ENCODE measurements at regions of chr17 and their contacts with region 1.

Region 1: GRCh38 chr17:35747540-35748017 is 5.5 kb downstream of the GAS2L2 start:
- DNase-seq: peak; percentile 85
- ATAC-seq: peak; percentile 90
- H3K4me3 Mint-ChIP-seq: no peak overlapping the region
- H3K27ac Mint-ChIP-seq: no peak overlapping the region
- H3K4me1 Mint-ChIP-seq: peaks cover 8% of the 10 kb centered on the region
- H3K27me3 Mint-ChIP-seq: peaks cover 46% of the 10 kb centered on the region

Region 2: DNA sequence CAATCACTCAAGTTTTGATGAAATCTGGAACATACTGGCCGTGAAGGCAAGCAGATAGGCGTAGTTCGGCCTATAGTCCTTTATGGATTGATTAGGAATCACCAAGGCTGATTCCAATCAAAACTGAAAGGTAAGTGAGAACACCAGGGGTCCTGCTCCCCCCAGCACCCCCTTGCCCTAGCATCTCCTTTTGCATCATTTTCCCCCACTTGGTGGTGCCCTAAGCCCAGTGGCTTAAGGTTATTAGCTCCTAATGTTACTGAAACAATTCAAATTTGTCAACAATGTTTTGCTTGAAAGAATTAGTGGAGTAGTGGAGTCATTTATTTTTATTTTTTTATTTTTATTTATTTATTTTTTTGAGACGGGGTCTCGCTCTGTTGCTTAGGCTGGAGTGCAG is 191.9 kb before region 1 on chr17:
- CTCF ChIA-PET with region 1: interaction called, 10 read pairs
- DNase-seq: no peak
- ATAC-seq: no peak
- H3K4me3 Mint-ChIP-seq: no peak overlapping the region
- H3K27ac Mint-ChIP-seq: no peak overlapping the region
- H3K4me1 Mint-ChIP-seq: peaks cover 5% of the 10 kb centered on the region
- H3K27me3 Mint-ChIP-seq: peaks cover 26% of the 10 kb centered on the region

Region 3: GRCh38 chr17:35607239-35607847 is 140.2 kb before region 1 on chr17:
- CTCF ChIA-PET with region 1: interaction called, 55 read pairs
- DNase-seq: no peak
- ATAC-seq: no peak
- H3K4me3 Mint-ChIP-seq: no peak overlapping the region
- H3K27ac Mint-ChIP-seq: no peak overlapping the region
- H3K4me1 Mint-ChIP-seq: peaks cover 4% of the 10 kb centered on the region
- H3K27me3 Mint-ChIP-seq: no peaks in the 10 kb centered on the region

Region 4: DNA sequence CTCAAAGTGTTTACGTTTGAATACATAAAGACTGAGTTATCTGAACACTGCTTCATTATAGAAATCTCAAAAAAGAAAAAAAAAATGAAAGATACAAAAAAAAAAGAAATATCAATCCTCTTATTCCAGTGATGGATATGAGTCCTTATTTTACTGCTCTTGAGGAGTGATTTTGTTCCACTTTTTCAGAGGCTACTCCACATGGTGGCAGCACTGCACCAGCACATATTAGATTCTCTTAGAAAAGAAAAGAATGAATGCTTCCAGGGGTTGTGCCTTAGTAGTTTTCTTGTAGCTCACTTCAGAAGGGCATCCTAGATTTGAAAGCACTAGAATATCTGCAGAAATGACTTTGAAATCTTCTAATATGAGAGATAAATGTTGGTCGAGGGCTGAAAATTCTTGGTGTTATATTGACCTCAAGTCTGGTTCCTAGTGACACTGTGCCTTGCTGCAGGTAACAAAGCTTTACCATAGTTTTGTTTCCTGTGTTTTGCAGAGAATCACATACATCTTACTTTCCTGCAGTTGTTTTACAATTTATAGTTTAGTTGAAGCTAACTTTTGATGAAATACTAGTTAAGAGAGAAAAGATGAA is 134.6 kb before region 1 on chr17:
- CTCF ChIA-PET with region 1: interaction called, 55 read pairs
- DNase-seq: peak; percentile 56
- ATAC-seq: no peak
- H3K4me3 Mint-ChIP-seq: no peak overlapping the region
- H3K27ac Mint-ChIP-seq: no peak overlapping the region
- H3K4me1 Mint-ChIP-seq: no peaks in the 10 kb centered on the region
- H3K27me3 Mint-ChIP-seq: no peaks in the 10 kb centered on the region

Region 5: DNA sequence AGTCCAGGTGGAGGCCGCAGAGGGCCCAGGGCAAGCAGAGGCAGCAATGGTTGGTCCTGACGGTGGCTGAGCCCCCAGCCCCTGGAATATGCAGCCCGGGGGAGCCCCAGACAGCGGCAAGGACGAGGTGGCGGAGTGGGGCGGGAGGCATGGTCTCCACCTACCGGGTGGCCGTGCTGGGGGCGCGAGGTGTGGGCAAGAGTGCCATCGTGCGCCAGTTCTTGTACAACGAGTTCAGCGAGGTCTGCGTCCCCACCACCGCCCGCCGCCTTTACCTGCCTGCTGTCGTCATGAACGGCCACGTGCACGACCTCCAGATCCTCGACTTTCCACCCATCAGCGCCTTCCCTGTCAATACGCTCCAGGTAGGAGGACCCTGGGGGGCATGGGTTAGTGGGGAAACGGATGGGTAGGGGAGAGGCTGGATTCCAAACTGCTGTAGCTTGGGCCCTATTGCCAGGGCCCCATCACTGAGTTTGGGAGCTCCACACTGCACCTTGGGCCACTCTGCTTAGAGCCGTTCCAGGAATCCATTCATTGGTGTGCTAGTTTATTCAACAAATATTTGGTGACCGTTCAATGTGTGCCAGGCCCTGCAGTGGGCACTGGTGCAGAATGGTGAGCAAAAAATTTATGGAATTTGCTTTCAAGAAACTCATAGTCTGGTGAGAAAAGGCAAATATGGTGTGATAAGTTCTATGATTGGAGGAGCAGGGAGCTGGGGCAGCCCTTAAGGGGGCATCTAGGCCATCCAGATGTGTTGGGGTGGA is 12.4 kb before region 1 on chr17:
- CTCF ChIA-PET with region 1: interaction called, 11 read pairs
- DNase-seq: no peak
- ATAC-seq: no peak
- H3K4me3 Mint-ChIP-seq: no peak overlapping the region
- H3K27ac Mint-ChIP-seq: no peak overlapping the region
- H3K4me1 Mint-ChIP-seq: peaks cover 5% of the 10 kb centered on the region
- H3K27me3 Mint-ChIP-seq: peaks cover 33% of the 10 kb centered on the region

Region 6: GRCh38 chr17:35788504-35789368 is 41.2 kb after region 1 on chr17:
- CTCF ChIA-PET with region 1: no interaction called
- DNase-seq: no peak
- ATAC-seq: no peak
- H3K4me3 Mint-ChIP-seq: no peak overlapping the region
- H3K27ac Mint-ChIP-seq: no peak overlapping the region
- H3K4me1 Mint-ChIP-seq: no peaks in the 10 kb centered on the region
- H3K27me3 Mint-ChIP-seq: peaks cover 46% of the 10 kb centered on the region

Measured in activated CD8-positive, alpha-beta memory T cell treated with anti-CD3 and anti-CD28 coated beads, Interleukin-2, amount 10 ng/mL, durations not matched to agents 7 days and 5 days (primary cell).